Breast epithelium (tissue), 4 donors: ENCODE measurements at regions of chr15 and their contacts with region 1.

Region 1: GRCh38 chr15:65836665-65837064 is 32.6 kb upstream of the RAB11A start:
- DNase-seq: no peak
- H3K4me3 ChIP-seq: no peak overlapping the region
- H3K27ac ChIP-seq: no peak overlapping the region
- H3K4me1 ChIP-seq: peaks cover 0 to 13% of the 10 kb centered on the region in 2 donors
- H3K27me3 ChIP-seq: no peaks in the 10 kb centered on the region
- CTCF ChIP-seq: no peak
- POLR2A ChIP-seq: no peak

Region 2: DNA sequence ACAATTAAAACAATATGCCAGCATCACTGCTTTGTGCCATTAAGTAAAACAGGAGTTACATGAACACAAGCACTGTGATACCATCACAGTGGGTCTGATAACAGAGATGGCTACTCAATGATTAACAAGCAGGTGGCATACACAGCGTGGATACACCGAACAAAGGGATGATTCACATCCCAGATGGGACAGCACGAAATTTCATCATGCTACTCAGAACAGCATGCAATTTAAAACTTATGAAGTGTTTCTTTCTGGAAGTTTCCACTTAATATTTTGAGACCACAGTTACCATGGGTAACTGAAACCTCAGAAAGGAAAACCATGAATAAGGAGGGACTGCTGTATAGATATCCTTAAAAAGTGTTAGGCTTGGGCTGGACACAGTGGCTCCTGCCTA is 170.4 kb before region 1 on chr15:
- intact Hi-C with region 1: no loop called
- DNase-seq: no peak
- H3K4me3 ChIP-seq: no peak overlapping the region
- H3K27ac ChIP-seq: no peak overlapping the region
- H3K4me1 ChIP-seq: no peaks in the 10 kb centered on the region
- H3K27me3 ChIP-seq: no peaks in the 10 kb centered on the region
- CTCF ChIP-seq: no peak
- POLR2A ChIP-seq: no peak

Region 3: GRCh38 chr15:65796610-65797012 is 40.1 kb before region 1 on chr15:
- intact Hi-C with region 1: loop called (anchors 2 kb)
- DNase-seq: no peak
- H3K4me3 ChIP-seq: no peak overlapping the region
- H3K27ac ChIP-seq: no peak overlapping the region
- H3K4me1 ChIP-seq: no peaks in the 10 kb centered on the region
- H3K27me3 ChIP-seq: no peaks in the 10 kb centered on the region
- CTCF ChIP-seq: no peak
- POLR2A ChIP-seq: no peak

Region 4: DNA sequence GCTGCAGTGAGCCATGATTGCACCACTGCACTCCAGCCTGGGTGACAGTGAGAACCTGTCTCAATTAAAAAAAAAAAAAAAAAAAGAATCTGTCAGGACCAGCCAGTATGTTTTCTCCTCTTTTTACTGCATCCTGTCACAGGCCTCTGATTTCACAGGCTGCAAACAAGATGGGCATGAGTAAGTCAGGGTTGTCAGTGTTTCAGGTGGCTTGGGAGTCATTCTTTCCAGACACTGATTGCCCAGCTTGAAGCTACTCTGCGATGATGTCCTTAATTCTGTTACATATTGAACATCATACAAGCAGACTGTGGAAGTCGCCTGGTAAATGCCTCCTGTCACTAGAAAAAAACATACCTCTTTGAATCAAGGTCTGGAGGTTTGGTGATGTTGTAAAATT is 475.5 kb after region 1 on chr15:
- intact Hi-C with region 1: no loop called
- DNase-seq: no peak
- H3K4me3 ChIP-seq: no peak overlapping the region
- H3K27ac ChIP-seq: no peak overlapping the region
- H3K4me1 ChIP-seq: no peaks in the 10 kb centered on the region
- H3K27me3 ChIP-seq: no peaks in the 10 kb centered on the region
- CTCF ChIP-seq: no peak
- POLR2A ChIP-seq: no peak